ENCODE measurements at regions of chr4 and their contacts with region 1.

Region 1: GRCh38 chr4:142567199-142567598 is 278.9 kb downstream of the INPP4B start:
- DNase-seq: peak; percentile 68
- H3K4me3 Mint-ChIP-seq: peak overlapping the region; percentile 82
- H3K27ac Mint-ChIP-seq: peak overlapping the region; percentile 96
- H3K4me1 Mint-ChIP-seq: peaks cover 63% of the 10 kb centered on the region
- H3K27me3 Mint-ChIP-seq: no peaks in the 10 kb centered on the region

Region 2: DNA sequence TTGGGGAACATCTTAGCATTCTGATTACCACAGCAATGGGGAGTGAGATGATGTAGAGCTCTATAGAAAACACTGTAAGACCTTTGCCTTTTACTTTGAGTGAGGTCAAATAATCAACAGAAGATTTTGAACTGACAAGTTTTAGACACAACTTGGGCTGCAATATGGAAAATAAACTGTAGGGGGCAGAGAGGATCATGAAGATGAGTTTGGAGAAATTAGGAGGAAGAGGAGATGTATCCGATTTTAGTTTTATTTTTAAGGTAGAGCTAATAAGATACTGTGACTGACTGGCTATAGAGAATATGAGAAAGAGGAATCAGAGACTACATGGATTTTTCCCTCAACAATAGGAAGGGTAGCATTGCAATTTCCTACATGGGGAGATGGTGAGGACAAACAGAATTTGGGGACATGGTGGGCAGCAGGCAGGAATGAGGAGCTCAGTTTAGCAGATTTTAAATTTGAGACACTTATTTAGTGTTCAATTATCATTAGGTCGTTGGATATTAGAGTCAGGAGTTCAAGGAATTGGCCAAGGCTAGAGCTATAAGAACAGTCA is 284.2 kb before region 1 on chr4:
- CTCF ChIA-PET with region 1: interaction called, 11 read pairs
- POLR2A ChIA-PET with region 1: interaction called, 5 read pairs
- DNase-seq: no peak
- H3K4me3 Mint-ChIP-seq: no peak overlapping the region
- H3K27ac Mint-ChIP-seq: no peak overlapping the region
- H3K4me1 Mint-ChIP-seq: peaks cover 11% of the 10 kb centered on the region
- H3K27me3 Mint-ChIP-seq: no peaks in the 10 kb centered on the region

Region 3: DNA sequence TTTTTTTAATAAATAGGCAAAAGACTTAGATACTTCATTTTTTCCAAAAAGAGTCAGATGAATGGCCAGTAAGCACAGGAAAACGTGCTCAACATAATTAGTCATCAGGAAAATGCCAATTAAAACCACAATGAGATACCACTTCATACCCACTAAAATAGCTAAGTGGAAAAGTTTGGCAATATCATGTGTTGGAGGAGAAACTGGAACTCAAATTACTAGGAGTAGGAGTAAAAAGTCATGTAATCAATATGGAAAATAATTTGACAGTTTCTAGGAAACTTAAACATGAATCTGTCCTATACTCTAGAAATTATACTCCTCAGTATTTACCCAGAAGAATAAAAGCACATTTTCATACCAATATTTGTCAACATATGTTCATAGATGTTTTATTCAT is 170.9 kb before region 1 on chr4:
- CTCF ChIA-PET with region 1: interaction called, 3 read pairs
- POLR2A ChIA-PET with region 1: interaction called, 37 read pairs
- DNase-seq: no peak
- H3K4me3 Mint-ChIP-seq: peak overlapping the region; percentile 69
- H3K27ac Mint-ChIP-seq: peak overlapping the region; percentile 70
- H3K4me1 Mint-ChIP-seq: peaks cover 75% of the 10 kb centered on the region
- H3K27me3 Mint-ChIP-seq: no peaks in the 10 kb centered on the region

Region 4: DNA sequence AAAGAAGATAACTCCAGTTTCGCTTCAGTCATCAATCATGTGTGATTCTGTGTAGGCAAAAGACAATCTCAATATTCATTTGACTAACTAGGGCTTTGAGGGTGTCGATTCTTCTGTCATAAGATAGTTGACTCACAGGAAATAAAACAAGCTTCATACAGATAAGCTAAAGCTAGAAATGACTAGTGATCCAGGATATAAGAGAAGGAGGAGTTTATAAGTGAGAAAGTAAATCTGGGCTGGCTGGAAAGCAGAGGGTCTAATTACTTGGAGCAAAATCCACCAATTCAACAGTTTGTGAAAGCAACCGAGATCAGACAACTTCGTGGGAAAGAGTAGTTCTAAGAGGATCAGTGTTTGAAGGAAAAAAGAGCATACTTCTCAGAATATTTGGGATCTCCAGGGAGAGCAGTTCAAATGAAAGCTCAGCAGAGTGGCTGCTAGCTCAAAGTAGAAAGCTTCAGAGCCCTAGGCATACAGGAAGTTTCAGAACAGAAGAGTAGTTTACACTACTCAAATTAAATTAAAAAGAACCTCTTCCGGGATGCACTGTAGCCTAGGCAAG is 150.4 kb before region 1 on chr4:
- CTCF ChIA-PET with region 1: interaction called, 4 read pairs
- POLR2A ChIA-PET with region 1: interaction called, 27 read pairs
- DNase-seq: no peak
- H3K4me3 Mint-ChIP-seq: peak overlapping the region; percentile 63
- H3K27ac Mint-ChIP-seq: peak overlapping the region; percentile 98
- H3K4me1 Mint-ChIP-seq: peaks cover 39% of the 10 kb centered on the region
- H3K27me3 Mint-ChIP-seq: no peaks in the 10 kb centered on the region

Region 5: GRCh38 chr4:142516670-142517526 is 50.3 kb before region 1 on chr4:
- CTCF ChIA-PET with region 1: no interaction called
- POLR2A ChIA-PET with region 1: no interaction called
- DNase-seq: no peak
- H3K4me3 Mint-ChIP-seq: no peak overlapping the region
- H3K27ac Mint-ChIP-seq: no peak overlapping the region
- H3K4me1 Mint-ChIP-seq: no peaks in the 10 kb centered on the region
- H3K27me3 Mint-ChIP-seq: no peaks in the 10 kb centered on the region

Region 6: DNA sequence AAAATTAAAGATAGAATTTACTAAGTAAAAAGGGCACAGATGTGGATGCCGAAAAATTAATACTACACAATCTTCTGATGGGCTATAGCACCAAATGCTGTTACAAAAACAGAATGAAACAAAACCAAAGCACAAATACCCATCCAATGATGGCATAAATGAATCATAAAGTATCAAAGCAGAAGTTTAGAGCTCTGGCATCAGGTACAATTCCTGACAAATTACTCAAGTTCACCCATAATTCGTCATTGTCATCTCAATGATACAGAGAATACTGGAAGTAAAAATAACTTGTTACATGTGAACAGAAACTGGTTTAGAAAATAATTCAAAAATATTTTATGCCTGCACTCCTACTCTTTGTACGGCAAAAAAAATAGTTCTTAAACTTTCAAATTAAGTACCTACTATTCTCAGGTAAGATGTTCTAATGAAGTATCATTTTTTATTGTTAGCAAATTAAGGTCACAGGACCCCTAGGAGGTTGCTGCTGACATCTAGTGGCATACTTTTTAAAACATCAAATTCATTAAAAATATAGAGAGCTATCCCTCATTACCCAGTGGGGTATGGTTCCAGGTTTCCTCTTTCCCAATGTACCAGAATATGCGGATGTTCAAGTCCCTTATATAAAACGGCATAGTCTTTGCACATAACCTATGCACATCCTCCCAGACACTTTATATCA is 152.8 kb after region 1 on chr4:
- CTCF ChIA-PET with region 1: interaction called, 10 read pairs
- POLR2A ChIA-PET with region 1: interaction called, 3 read pairs
- DNase-seq: no peak
- H3K4me3 Mint-ChIP-seq: no peak overlapping the region
- H3K27ac Mint-ChIP-seq: no peak overlapping the region
- H3K4me1 Mint-ChIP-seq: peaks cover 4% of the 10 kb centered on the region
- H3K27me3 Mint-ChIP-seq: no peaks in the 10 kb centered on the region